SK-N-SH (cell line): ENCODE measurements at regions of chr3 and their contacts with region 1.

Region 1: GRCh38 chr3:128456776-128457715 is 9.6 kb downstream of the DNAJB8 start:
- DNase-seq: peak; percentile 96
- H3K4me3 ChIP-seq: peak overlapping the region in 1 of 2 experiments; percentile 50; a peak in 2 of 4 replicates
- H3K27ac ChIP-seq: peak overlapping the region in 1 of 2 experiments; percentile 100; a peak in 2 of 4 replicates
- H3K4me1 ChIP-seq: peaks cover 0 to 75% of the 10 kb centered on the region in 2 experiments; a peak in 1 of 4 replicates
- H3K27me3 ChIP-seq: peaks cover 5% of the 10 kb centered on the region; the same call in 1 of the 2 replicates
- CTCF ChIP-seq: no peak
- EP300 ChIP-seq: peak in 1 of 2 experiments; percentile 98; a peak in 2 of 4 replicates
- RAD21 ChIP-seq: peak; percentile 25

Region 2: GRCh38 chr3:128416578-128417211 is 40.4 kb before region 1 on chr3:
- CTCF ChIA-PET with region 1: interaction called, 3 read pairs
- POLR2A ChIA-PET with region 1: interaction called, 50 read pairs
- DNase-seq: peak; percentile 55
- H3K4me3 ChIP-seq: no peak overlapping the region
- H3K27ac ChIP-seq: peak overlapping the region in 1 of 2 experiments; percentile 100; a peak in 3 of 4 replicates
- H3K4me1 ChIP-seq: peaks cover 0 to 81% of the 10 kb centered on the region in 2 experiments; a peak in 1 of 4 replicates
- H3K27me3 ChIP-seq: no peaks in the 10 kb centered on the region
- CTCF ChIP-seq: no peak
- EP300 ChIP-seq: no peak
- RAD21 ChIP-seq: no peak

Region 3: GRCh38 chr3:128438488-128439072 is 18.5 kb before region 1 on chr3:
- CTCF ChIA-PET with region 1: interaction called, 13 read pairs
- POLR2A ChIA-PET with region 1: interaction called, 8 read pairs
- DNase-seq: peak; percentile 41
- H3K4me3 ChIP-seq: no peak overlapping the region
- H3K27ac ChIP-seq: no peak overlapping the region
- H3K4me1 ChIP-seq: peaks cover 0 to 30% of the 10 kb centered on the region in 2 experiments; a peak in 1 of 4 replicates
- H3K27me3 ChIP-seq: no peaks in the 10 kb centered on the region
- CTCF ChIP-seq: peak; percentile 51
- EP300 ChIP-seq: no peak
- RAD21 ChIP-seq: no peak

Region 4: GRCh38 chr3:128476659-128477058 is 19.6 kb after region 1 on chr3:
- CTCF ChIA-PET with region 1: interaction called, 5 read pairs
- POLR2A ChIA-PET with region 1: interaction called, 26 read pairs
- DNase-seq: no peak
- H3K4me3 ChIP-seq: no peak overlapping the region
- H3K27ac ChIP-seq: peak overlapping the region in 1 of 2 experiments; percentile 39; a peak in 2 of 4 replicates
- H3K4me1 ChIP-seq: peaks cover 0 to 55% of the 10 kb centered on the region in 2 experiments; a peak in 1 of 4 replicates
- H3K27me3 ChIP-seq: peaks cover 7% of the 10 kb centered on the region
- CTCF ChIP-seq: no peak
- EP300 ChIP-seq: no peak
- RAD21 ChIP-seq: no peak

Region 5: GRCh38 chr3:128482666-128483656 is 25.9 kb after region 1 on chr3:
- CTCF ChIA-PET with region 1: interaction called, 8 read pairs
- POLR2A ChIA-PET with region 1: interaction called, 21 read pairs
- DNase-seq: peak; percentile 63
- H3K4me3 ChIP-seq: peak overlapping the region; percentile 12 to 75
- H3K27ac ChIP-seq: peak overlapping the region; percentile 51 to 97
- H3K4me1 ChIP-seq: peaks cover 8 to 43% of the 10 kb centered on the region in 2 experiments
- H3K27me3 ChIP-seq: no peaks in the 10 kb centered on the region
- CTCF ChIP-seq: peak; percentile 38
- EP300 ChIP-seq: peak in 1 of 2 experiments; percentile 35; a peak in 1 of 4 replicates
- RAD21 ChIP-seq: no peak

Region 6: DNA sequence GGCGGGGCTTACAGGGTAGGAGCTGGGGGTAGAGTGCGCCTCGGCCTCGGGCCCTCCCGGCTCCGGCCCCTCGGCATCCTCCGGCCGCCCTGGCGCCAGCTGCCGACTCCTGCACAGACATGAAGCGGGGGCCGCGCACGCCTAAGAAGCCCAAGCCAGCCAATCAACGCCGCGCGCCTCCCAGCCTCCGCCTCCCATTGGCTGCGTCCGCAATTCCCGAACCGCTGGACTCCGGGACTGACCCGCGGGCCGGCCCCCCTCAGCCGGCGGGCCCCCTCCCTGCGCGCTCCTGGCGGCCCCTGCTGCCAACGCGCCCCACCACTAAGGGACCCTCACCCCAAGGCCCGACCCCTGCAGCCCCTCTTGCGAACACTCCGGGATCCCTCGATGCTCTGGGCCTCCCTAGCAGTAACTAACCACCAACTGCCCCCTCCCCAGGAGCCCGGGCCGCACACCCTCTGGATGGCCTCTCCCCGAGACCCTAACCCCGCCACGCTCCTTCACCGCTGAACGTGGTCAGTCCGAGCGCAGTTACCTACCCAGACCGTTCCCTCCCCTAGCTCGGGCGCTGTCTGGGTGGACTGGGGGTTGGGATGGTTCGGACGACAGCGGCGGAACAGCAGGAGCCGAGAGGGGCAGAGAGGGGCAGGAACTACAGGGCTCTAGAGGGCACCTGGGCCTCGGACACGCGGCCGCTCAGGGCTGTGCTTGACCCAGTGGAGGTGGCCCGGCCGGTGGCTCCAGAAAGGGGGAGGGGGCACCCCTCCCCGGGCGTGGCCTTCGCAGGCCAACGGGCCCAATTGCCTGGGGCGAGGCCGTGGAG is 31.0 kb after region 1 on chr3:
- CTCF ChIA-PET with region 1: interaction called, 8 read pairs
- POLR2A ChIA-PET with region 1: interaction called, 21 read pairs
- DNase-seq: peak; percentile 82
- H3K4me3 ChIP-seq: peak overlapping the region; percentile 75 to 77
- H3K27ac ChIP-seq: peak overlapping the region; percentile 36 to 97
- H3K4me1 ChIP-seq: peaks cover 4 to 8% of the 10 kb centered on the region in 2 experiments; a peak in 3 of 4 replicates
- H3K27me3 ChIP-seq: peaks cover 23% of the 10 kb centered on the region; the same call in 1 of the 2 replicates
- CTCF ChIP-seq: no peak
- EP300 ChIP-seq: no peak
- RAD21 ChIP-seq: no peak

Region 7: GRCh38 chr3:128497387-128498126 is 40.5 kb after region 1 on chr3:
- CTCF ChIA-PET with region 1: interaction called, 8 read pairs
- POLR2A ChIA-PET with region 1: interaction called, 21 read pairs
- DNase-seq: peak; percentile 95
- H3K4me3 ChIP-seq: peak overlapping the region; percentile 44 to 58
- H3K27ac ChIP-seq: peak overlapping the region in 1 of 2 experiments; percentile 97; a peak in 2 of 4 replicates
- H3K4me1 ChIP-seq: peaks cover 0 to 47% of the 10 kb centered on the region in 2 experiments; a peak in 1 of 4 replicates
- H3K27me3 ChIP-seq: peaks cover 3% of the 10 kb centered on the region; the same call in 1 of the 2 replicates
- CTCF ChIP-seq: peak; percentile 74
- EP300 ChIP-seq: peak in 1 of 2 experiments; percentile 8; a peak in 1 of 4 replicates
- RAD21 ChIP-seq: peak; percentile 64

Region 8: DNA sequence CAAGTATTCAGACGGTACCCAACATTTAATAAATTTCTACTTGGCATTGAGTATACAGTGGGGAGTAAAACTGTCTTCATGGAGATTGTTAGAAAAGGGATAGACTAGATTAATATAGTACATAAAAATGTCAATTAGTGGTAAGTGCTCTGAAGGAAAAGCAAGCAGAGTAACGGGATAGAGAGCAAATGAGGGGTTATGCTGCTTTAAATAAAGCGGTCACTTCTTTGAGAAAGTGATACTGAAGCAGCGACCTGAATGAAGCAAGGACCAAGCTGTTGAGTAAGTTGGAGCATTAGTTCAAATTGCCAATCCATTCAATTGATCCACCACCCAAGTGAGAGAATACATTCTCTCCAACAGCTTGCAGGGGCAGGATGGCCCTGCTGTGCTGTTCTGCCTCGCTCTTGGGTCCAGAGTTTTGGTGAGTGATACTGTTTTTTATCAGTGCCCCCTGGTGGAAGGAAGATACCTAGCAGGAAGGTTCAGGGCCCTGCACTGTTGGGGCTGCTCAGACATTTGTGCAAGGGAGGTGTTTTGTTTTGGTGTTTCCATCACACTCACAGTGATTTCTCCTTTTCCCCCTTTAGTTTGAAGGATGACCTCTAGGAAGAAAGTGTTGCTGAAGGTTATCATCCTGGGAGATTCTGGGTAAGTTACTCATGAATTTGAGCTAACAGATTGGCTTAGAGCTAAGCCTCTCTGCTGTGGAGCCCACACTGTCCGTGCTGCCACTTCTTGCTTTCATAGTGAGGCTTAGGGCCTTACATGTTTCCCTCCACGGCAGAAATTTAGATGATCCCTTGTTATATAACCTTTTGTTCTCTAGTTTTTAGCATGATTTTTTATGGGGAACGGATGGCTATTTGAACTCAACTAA is 338.0 kb after region 1 on chr3:
- CTCF ChIA-PET with region 1: no interaction called
- POLR2A ChIA-PET with region 1: no interaction called
- DNase-seq: peak; percentile 81
- H3K4me3 ChIP-seq: no peak overlapping the region; a peak in 1 of 4 replicates
- H3K27ac ChIP-seq: peak overlapping the region; percentile 20 to 69; a peak in 3 of 4 replicates
- H3K4me1 ChIP-seq: peaks cover 5 to 13% of the 10 kb centered on the region in 2 experiments; a peak in 2 of 4 replicates
- H3K27me3 ChIP-seq: no peaks in the 10 kb centered on the region
- CTCF ChIP-seq: peak; percentile 82
- EP300 ChIP-seq: no peak
- RAD21 ChIP-seq: peak; percentile 78